ENCODE measurements at regions of chr19 and their contacts with region 1.

Region 1: GRCh38 chr19:768424-768823 is 17.5 kb downstream of the MISP start:
- DNase-seq: no peak
- H3K4me3 ChIP-seq: no peak overlapping the region
- CTCF ChIP-seq: no peak
- POLR2A ChIP-seq: no peak

Region 2: DNA sequence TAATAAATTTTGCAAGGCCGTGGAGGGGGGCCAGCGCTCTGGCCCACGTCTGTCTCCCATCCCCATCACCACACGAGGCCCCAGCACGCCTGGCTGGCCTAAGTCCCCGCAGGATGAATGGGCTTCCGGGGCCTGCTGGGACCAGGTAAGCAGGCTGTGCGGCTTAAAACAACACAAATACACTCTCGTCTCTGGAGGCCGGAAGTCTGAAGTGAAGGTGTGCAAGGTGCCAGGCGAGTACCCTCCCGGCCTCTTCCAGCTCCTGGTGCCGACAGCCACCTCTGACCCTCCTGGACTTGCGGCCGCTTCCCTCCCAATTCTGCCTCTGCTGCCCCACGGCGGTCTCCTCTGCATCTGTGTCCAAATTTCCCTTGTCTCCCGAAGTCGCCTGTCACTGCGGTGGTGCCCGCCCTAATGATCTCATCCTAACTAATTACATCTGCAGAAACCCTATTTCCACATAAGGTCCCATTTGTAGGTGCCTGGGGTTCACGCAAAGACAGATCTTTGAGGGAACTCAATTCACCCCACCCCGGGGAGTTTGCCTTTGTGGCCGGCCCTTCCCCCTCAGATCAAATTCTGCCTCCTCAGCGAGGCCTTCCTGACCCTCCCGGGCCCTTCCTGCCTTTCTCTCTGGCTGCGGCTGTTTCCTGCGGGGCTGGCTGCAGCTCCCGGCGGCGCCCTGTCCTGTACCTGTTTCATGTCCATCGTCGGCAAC is 20.7 kb after region 1 on chr19:
- intact Hi-C with region 1: loop called (anchors 1 kb)
- DNase-seq: peak in 1 of 2 donors; percentile 90
- H3K4me3 ChIP-seq: no peak overlapping the region
- CTCF ChIP-seq: no peak
- POLR2A ChIP-seq: no peak

Region 3: DNA sequence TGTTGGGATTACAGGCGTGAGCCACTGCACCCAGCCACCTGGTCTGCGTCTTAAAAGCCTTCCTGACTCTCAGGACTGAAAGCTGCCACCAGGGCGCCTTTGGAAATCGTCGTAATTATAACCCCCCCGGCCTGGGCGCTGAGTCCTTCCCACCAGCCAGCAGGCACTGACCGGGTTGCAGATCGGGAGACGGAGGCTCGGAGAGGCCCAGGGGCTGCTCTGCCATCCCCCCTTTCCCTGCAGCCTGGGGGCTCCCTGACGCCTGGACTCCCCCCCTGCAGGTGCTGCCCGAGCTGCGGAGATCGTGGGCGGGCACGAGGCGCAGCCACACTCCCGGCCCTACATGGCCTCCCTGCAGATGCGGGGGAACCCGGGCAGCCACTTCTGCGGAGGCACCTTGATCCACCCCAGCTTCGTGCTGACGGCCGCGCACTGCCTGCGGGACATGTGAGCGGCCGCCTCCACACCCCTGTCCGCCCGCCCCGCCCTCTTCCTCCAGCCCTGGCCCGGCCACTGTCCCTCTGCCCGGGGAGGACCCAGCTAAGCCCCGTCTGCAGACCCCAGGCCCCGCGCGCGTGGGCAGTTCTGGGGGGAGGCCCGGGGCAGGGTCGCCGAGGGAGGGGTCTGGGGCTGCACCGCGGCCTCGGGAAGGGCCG is 74.9 kb after region 1 on chr19:
- intact Hi-C with region 1: loop called (anchors 10 kb)
- DNase-seq: no peak
- H3K4me3 ChIP-seq: no peak overlapping the region
- CTCF ChIP-seq: no peak
- POLR2A ChIP-seq: no peak

Region 4: GRCh38 chr19:917323-918151 is 149.1 kb after region 1 on chr19 and contains the start of gene KISS1R:
- intact Hi-C with region 1: loop called (anchors 5 kb)
- DNase-seq: no peak
- H3K4me3 ChIP-seq: peak within 1 kb of the TSS; percentile 15
- CTCF ChIP-seq: no peak
- POLR2A ChIP-seq: no peak
- total RNA-seq, gene KISS1R: 0.88 to 3.5 TPM in 2 of 4 donors, not detected in the others

Region 5: GRCh38 chr19:940591-941291 is 172.3 kb after region 1 on chr19:
- intact Hi-C with region 1: no loop called
- DNase-seq: peak; percentile 76 to 95
- H3K4me3 ChIP-seq: no peak overlapping the region
- CTCF ChIP-seq: no peak
- POLR2A ChIP-seq: no peak

Region 6: DNA sequence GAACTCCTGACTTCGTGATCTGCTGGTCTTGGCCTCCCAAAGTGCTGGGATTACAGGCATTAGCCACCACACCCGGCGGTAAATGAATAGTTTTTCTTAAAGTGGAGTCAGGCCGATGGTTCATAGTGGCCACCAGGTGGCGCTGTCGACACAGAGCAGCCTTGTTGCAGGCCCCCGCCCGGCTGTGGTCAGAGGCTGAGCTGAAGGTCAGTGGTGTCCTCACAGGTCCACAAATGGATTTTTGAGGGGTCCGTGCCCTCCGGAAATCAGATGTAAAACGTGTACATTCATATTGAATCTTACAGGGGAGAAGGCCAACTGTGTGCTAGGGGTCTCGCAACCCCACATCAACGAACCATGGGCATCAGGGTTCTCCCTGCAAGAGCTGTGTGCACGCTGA is 202.3 kb after region 1 on chr19:
- intact Hi-C with region 1: loop called (anchors 10 kb)
- DNase-seq: no peak
- H3K4me3 ChIP-seq: no peak overlapping the region
- CTCF ChIP-seq: no peak
- POLR2A ChIP-seq: no peak